HepG2 (cell line): ENCODE measurements at regions of chr18 and their contacts with region 1.

Region 1: DNA sequence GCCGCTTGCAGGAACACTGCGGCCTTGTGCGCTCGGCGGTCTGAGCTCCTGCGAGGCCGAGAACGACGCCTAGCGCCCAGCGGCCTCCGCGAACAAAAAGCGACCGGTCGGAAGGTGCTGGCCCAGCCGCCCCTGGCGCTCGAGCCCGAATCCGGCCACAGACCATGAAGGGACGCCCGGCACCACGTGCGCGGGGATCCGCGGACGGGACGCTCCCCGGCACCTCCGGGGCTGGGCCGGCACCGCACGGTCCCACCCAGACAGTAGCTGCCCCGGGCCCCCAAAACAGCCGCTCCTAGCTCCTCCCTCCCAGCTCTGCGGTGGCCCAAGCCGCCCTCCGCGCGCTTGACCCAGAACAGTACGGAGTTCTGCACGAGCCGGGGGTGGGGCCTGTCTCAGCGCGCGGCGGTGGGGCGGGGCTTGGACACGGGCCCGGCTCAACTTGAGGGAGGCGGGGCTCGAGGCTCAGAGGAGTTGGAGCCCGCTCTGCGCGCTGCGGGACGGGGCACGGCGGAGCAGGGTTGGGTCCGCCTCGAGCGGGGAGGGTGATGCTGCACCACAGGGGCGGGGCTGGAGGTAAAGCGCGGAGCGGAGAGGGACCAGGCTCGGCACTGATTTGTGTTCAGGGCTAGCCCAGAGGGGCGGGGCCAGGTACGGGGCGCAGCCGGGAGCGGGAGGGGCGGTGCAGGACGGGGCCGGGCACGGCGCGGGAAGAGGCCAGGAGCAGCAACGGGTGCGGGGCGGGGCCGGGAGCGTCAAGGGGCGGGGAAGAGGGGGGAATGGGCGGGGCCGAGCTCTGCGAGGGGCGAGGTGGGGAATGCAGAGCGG is 538 bp upstream of the IMPA2 start:
- DNase-seq: peak; percentile 97
- ATAC-seq: peak; percentile 82
- H3K4me3 ChIP-seq: peak overlapping the region; percentile 45 to 74 (median 53); a peak in 5 of 6 replicates
- H3K27ac ChIP-seq: peak overlapping the region; percentile 93
- H3K4me1 ChIP-seq: peaks cover 56% of the 10 kb centered on the region
- H3K27me3 ChIP-seq: no peaks in the 10 kb centered on the region
- CTCF ChIP-seq: 0 out of 2 replicates have a peak, but pooled peaks have one; percentile 19
- EP300 ChIP-seq: 0 out of 4 replicates have a peak, but pooled peaks of 1 of the 2 experiments have one; percentile 4
- POLR2A ChIP-seq: peak; percentile 86 to 89
- RAD21 ChIP-seq: peak; percentile 58

Region 2: DNA sequence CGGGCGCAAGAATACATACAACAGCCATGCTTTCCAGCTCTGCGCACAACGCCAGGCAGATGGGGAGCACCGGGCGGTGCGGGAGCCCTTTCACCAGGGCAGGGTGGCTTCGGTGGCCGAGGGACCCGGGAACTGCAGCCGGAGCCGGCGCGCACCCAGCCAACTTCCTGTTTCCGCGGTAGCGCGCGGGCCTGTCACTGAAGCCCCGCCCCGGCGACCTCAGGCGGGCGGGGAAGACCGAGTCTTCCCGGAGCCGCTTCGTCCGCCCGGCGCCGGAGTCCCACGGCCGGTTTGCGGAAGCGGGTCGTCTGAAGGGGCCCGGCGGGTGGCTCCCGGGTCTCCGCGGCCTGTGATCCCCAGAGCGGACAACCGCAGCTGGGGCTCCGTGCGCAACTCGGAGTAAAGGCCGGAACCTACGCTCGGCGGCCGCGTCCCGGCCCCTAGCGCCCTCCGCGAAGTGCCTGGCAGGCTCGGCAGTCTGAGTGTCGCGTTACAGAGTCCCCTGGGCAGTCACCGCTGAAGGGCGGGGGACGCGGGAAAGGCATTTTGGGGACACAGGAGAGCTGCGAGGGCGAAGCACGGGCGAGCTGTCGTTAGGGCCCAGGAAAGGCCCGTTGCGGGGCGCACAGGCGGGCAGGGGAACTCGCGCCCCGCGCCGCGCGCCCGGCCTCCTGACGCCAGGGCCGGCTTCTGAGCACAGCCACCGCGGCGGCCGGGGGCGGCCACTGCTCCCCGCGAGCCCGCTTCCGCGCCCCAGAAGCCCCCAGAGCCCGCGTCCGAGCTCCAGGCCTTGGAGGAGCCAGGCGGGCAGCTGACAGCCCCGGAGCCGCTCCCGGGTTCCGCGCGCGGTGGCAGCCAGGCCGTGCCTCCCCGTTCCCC is 72.3 kb before region 1 on chr18 and contains the start of gene MPPE1:
- CTCF ChIA-PET with region 1: no interaction called
- POLR2A ChIA-PET with region 1: interaction called, 11 read pairs
- in situ Hi-C with region 1: no loop called
- intact Hi-C with region 1: no loop called
- DNase-seq: peak; percentile 73
- ATAC-seq: peak; percentile 95
- H3K4me3 ChIP-seq: peak within 1 kb of the TSS; percentile 68 to 86 (median 82)
- H3K27ac ChIP-seq: peak within 1 kb of the TSS; percentile 96
- H3K4me1 ChIP-seq: peaks cover 30% of the 10 kb centered on the region
- H3K27me3 ChIP-seq: no peaks in the 10 kb centered on the region; a peak in 1 of 5 replicates
- CTCF ChIP-seq: peak; percentile 26; the same call in 1 of the 2 replicates
- EP300 ChIP-seq: no peak
- POLR2A ChIP-seq: peak; percentile 74 to 78
- RAD21 ChIP-seq: no peak
- total RNA-seq, gene MPPE1: 5.4 and 11.9 TPM in 2 replicates

Region 3: DNA sequence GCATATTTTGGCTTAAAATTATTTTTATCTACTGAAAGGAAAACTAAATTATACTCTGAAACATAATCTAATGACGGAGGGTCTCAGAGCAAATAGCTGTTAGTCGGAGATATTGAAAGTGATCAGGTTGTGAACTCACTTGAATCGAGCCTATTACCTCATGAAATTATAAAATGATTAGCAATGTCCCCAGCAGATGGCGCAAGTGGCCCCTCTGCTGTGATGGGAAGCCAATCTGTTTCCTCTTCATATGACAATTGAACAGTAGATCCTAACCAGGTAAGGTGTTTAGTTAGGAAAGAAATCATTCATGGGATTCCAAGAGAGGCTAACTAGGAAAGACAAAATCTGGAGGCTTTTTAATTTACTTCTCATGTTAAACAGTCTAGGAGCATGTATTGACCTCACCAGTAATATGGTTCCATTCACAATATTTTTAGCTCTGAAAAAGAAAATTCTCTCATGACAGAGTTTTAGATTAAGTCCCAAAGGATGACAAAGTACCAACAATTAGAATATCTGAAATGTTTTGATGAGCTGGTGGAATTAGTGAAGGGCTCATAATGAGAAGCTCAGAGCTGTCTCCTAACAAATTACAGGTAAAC is 42.8 kb before region 1 on chr18:
- CTCF ChIA-PET with region 1: no interaction called
- POLR2A ChIA-PET with region 1: interaction called, 15 read pairs
- in situ Hi-C with region 1: no loop called
- intact Hi-C with region 1: loop called (anchors 1 kb)
- DNase-seq: peak; percentile 48
- ATAC-seq: peak; percentile 68
- H3K4me3 ChIP-seq: no peak overlapping the region
- H3K27ac ChIP-seq: no peak overlapping the region
- H3K4me1 ChIP-seq: no peaks in the 10 kb centered on the region
- H3K27me3 ChIP-seq: no peaks in the 10 kb centered on the region; a peak in 1 of 5 replicates
- CTCF ChIP-seq: peak; percentile 87
- EP300 ChIP-seq: no peak
- POLR2A ChIP-seq: no peak
- RAD21 ChIP-seq: peak; percentile 86

Region 4: DNA sequence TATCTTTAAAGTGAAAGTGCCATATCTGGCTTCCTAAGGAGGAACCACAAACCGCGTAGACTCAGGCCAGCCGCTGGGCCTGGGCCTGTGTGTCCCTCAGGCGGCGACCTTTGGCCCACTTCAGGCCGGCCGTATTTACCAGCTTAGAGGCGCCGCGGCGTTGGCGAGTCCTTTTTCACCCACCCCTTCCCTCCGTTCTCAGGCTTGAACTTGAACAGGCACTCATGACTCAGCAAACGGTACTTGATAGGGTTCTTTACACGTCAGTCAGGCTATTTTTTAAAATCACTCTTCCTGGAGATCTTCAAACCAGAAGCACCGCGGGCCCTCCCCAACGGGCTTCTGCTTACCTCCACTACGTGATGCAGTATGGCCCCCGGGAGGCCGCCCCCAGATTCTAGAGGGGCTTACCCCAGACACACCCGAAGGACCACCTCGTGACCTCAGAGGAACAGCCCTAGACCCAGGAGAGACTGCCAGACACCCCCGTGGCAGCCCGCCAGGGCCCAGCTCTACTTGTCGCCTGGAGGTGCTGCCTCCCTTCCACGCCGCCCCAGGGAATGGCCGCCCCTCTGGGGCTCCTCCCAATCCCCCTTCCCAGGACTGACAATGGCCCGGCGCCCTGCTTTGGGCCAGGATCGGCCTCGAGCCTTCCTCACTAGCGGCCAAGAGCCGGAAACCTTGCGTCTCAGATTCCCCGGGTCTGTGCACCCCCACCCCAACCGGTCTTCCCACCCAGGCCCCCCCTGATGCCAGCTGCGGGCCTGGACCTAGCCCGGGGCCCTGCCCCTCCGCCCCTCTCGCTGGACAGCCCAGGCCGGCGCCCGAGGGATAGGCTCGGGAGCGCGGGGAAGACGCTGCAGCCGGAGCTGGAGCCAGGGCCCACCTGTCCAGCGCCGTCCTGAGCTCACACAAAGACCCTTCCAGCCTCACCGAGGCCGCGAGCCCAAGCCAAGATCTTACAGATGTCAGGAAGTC is 33.3 kb before region 1 on chr18:
- CTCF ChIA-PET with region 1: no interaction called
- POLR2A ChIA-PET with region 1: interaction called, 69 read pairs
- in situ Hi-C with region 1: no loop called
- intact Hi-C with region 1: no loop called
- DNase-seq: peak; percentile 79
- ATAC-seq: peak; percentile 87
- H3K4me3 ChIP-seq: peak overlapping the region; percentile 57 to 68 (median 62)
- H3K27ac ChIP-seq: peak overlapping the region; percentile 52
- H3K4me1 ChIP-seq: peaks cover 40% of the 10 kb centered on the region
- H3K27me3 ChIP-seq: no peaks in the 10 kb centered on the region
- CTCF ChIP-seq: no peak
- EP300 ChIP-seq: peak; percentile 12 to 70; a peak in 1 of 4 replicates
- POLR2A ChIP-seq: no peak
- RAD21 ChIP-seq: peak; percentile 14; the same call in 1 of the 2 replicates

Region 5: DNA sequence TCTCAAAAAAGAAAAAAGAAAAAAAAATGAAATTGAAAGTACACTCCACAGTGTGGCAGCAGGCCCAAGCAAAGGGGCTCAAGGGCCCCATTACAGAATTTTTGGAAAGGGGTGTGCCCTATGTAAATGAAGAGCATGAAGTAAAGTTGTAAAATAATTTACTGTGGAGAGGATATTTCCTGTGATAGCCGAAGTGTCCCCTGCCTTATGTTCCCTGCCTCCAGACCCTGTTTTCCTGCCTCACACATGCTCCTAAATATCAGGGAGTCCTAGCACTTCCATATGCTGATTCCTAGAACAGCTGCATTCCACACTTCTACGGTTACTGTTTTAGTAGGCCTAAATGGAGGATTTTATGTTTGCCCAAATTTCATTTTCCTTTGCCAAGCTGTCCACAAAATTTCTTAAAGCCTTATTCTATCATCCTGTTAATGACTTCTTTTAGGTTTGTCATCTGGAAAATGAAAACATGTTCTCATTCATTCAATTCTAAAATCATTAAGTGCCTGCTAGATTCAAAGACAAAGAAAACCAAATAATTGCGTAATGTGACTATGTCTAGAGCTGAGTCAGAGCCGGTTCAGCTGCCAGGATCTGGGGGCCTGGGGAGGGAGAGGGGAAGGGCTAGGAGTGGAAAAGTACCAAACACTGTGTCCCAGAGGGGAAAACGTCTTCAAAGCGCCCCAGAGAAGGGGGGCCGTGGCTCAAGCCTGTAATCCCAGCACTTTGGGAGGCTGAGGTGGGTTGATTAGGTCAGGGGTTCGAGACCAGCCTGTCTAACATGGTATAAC is 25.3 kb before region 1 on chr18:
- CTCF ChIA-PET with region 1: no interaction called
- POLR2A ChIA-PET with region 1: interaction called, 35 read pairs
- in situ Hi-C with region 1: no loop called
- intact Hi-C with region 1: loop called (anchors 2 kb)
- DNase-seq: peak; percentile 76
- ATAC-seq: peak; percentile 43
- H3K4me3 ChIP-seq: peak overlapping the region in 1 of 3 experiments; percentile 5; a peak in 1 of 6 replicates
- H3K27ac ChIP-seq: peak overlapping the region; percentile 72
- H3K4me1 ChIP-seq: peaks cover 51% of the 10 kb centered on the region
- H3K27me3 ChIP-seq: no peaks in the 10 kb centered on the region
- CTCF ChIP-seq: no peak
- EP300 ChIP-seq: peak in 1 of 2 experiments; percentile 87; a peak in 2 of 4 replicates
- POLR2A ChIP-seq: no peak
- RAD21 ChIP-seq: no peak

Region 6: DNA sequence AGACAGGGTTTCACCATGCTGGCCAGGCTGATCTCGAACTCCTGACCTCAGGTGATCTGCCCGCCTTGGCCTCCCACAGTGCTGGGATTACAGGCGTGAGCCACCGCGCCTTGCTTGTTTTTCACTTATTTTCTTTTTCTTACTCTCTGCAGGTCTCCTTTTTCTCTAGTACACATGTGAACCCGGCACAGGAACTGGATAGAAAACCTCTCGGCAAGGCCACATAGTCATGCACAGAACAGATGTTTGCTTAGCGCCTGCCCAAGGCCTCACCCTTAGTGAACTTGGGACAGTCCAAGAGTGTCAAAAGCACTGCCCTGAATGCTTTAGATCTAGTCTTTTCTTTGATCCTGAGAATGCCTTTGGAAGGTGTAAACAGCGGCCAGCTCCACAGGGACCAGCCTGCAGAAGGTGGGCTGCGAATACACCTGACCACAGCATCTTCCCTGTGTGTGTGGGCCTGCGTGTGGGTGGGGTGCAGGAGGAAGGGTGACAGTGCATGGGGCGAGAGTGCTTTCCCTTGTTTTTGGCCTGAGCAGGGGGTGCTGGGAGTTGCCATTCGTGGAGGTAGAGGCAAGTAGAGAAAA is 27.5 kb after region 1 on chr18:
- CTCF ChIA-PET with region 1: no interaction called
- POLR2A ChIA-PET with region 1: interaction called, 13 read pairs
- in situ Hi-C with region 1: no loop called
- intact Hi-C with region 1: loop called (anchors 2 kb)
- DNase-seq: peak; percentile 96
- ATAC-seq: peak; percentile 97
- H3K4me3 ChIP-seq: 0 out of 6 replicates have a peak overlapping the region, but pooled peaks of 1 of the 3 experiments have one; percentile 9
- H3K27ac ChIP-seq: peak overlapping the region; percentile 76
- H3K4me1 ChIP-seq: peaks cover 30% of the 10 kb centered on the region
- H3K27me3 ChIP-seq: no peaks in the 10 kb centered on the region
- CTCF ChIP-seq: no peak; the same call in 1 of the 2 replicates
- EP300 ChIP-seq: peak; percentile 81 to 92; a peak in 3 of 4 replicates
- POLR2A ChIP-seq: no peak
- RAD21 ChIP-seq: no peak

Region 7: DNA sequence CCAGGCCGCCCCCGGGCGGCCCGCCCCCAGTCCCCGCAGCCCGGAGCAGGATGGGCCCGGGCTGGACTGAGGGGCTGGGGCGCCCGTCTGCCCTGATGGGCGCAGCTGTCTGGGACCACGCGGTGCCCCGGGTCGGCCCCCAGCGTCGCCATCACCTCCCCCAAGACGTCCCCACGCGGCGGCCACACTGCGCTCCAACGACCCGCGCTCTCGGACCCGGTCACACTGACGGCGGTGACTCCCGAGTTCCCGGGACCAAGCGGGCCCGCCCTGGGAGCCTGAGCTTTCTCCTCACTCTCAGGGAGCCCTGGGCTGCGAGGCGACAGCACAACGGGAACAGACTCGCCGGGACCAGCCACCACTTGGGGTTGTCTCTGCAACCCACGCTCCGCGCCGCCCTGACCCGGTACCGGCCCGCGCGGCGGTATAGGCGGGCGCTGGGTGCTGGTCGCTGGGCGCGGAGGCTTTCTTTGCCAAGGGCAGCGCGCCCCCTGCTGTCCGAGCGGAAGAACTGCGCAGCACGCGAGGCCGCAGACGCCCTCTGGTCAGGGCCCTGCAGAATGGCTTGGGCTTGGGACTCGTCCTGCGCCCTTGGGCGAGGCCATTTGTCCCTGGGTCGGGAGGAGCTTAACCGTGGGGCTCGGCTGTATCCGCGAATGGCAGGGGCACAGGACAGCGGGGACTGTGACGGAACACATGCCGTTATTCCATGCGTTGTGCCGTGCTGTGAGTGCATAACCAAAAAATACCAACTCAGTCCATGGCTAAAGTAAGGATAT is 58.1 kb after region 1 on chr18:
- CTCF ChIA-PET with region 1: no interaction called
- POLR2A ChIA-PET with region 1: interaction called, 16 read pairs
- in situ Hi-C with region 1: no loop called
- intact Hi-C with region 1: loop called (anchors 2 kb)
- DNase-seq: peak; percentile 68
- ATAC-seq: peak; percentile 91
- H3K4me3 ChIP-seq: peak overlapping the region; percentile 50 to 75 (median 62); a peak in 5 of 6 replicates
- H3K27ac ChIP-seq: no peak overlapping the region
- H3K4me1 ChIP-seq: peaks cover 27% of the 10 kb centered on the region
- H3K27me3 ChIP-seq: peaks cover 0 to 10% of the 10 kb centered on the region in 2 experiments; a peak in 4 of 5 replicates
- CTCF ChIP-seq: peak; percentile 100
- EP300 ChIP-seq: no peak
- POLR2A ChIP-seq: no peak
- RAD21 ChIP-seq: peak; percentile 99

Region 8: DNA sequence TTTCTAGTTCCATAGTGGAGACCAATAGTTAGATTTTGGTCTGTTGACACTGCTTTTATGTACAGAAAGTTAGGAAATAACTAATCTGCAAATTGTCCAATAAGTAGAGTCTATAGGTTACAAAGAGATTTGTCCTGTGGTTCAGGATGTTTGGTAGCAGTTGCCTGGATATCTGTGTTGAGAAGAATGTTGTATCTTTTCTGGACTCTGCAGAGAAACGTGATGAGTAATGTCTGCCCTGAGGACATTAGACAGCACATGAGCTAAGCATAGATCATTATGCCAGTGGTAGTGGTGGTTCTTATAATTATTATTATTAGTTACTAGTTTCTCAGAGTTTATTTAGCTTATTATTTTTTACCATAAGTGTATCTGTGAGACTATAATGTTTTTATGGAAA is 178.7 kb after region 1 on chr18:
- CTCF ChIA-PET with region 1: no interaction called
- POLR2A ChIA-PET with region 1: no interaction called
- in situ Hi-C with region 1: no loop called
- intact Hi-C with region 1: no loop called
- DNase-seq: peak; percentile 18
- ATAC-seq: peak; percentile 70
- H3K4me3 ChIP-seq: no peak overlapping the region
- H3K27ac ChIP-seq: no peak overlapping the region
- H3K4me1 ChIP-seq: peaks cover 5% of the 10 kb centered on the region; the same call in 1 of the 2 replicates
- H3K27me3 ChIP-seq: no peaks in the 10 kb centered on the region; a peak in 1 of 5 replicates
- CTCF ChIP-seq: no peak
- EP300 ChIP-seq: no peak
- POLR2A ChIP-seq: no peak
- RAD21 ChIP-seq: no peak